ENCODE measurements at regions of chr15 and their contacts with region 1.

Region 1: DNA sequence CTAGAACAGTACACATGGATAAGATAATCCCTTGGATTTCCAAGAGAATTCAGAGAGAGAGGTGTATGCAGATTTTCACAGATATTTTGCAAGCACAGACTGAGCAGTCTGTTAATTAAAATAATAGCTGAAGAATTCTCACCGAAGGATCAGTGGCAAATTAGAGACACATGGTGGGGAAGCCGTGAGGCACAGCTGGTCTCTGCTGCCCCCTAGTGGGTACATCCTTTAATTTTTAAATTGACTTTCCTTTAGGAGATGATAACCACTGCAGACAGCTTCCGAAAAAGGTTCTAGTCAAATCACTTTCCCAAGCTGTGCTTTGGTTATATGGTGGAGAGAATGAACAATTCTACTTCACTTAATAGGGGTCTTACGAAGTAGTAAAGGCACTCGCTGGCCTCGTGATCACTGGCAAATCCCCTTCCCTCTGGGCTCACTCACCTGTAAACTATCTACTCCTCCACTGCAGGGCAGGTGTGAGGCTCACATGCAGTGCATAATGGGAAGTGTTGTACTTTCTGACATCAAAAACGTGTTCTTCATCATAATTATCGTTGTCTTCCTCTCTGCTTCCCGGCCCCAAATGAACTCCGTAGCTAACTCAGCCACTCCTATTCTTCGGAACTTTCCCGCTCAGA is 19.5 kb downstream of the MESD start:
- DNase-seq: peak; percentile 54
- ATAC-seq: peak; percentile 68
- H3K4me3 ChIP-seq: no peak overlapping the region
- H3K27ac ChIP-seq: no peak overlapping the region
- H3K4me1 ChIP-seq: peaks cover 13% of the 10 kb centered on the region
- H3K27me3 ChIP-seq: no peaks in the 10 kb centered on the region
- CTCF ChIP-seq: peak; percentile 86
- POLR2A ChIP-seq: 0 out of 2 replicates have a peak, but pooled peaks have one; percentile 40
- RAD21 ChIP-seq: peak; percentile 96

Region 2: GRCh38 chr15:80695104-80695910 is 274.8 kb before region 1 on chr15 and contains the start of gene ABHD17C:
- CTCF ChIA-PET with region 1: no interaction called
- POLR2A ChIA-PET with region 1: no interaction called
- dilution Hi-C with region 1: no loop called
- in situ Hi-C with region 1: no loop called
- intact Hi-C with region 1: loop called (anchors 5 kb)
- DNase-seq: peak; percentile 53
- ATAC-seq: peak; percentile 84
- H3K4me3 ChIP-seq: peak within 1 kb of the TSS; percentile 100
- H3K27ac ChIP-seq: peak within 1 kb of the TSS; percentile 92
- H3K4me1 ChIP-seq: peaks cover 14% of the 10 kb centered on the region
- H3K27me3 ChIP-seq: no peaks in the 10 kb centered on the region
- CTCF ChIP-seq: no peak
- POLR2A ChIP-seq: no peak
- RAD21 ChIP-seq: no peak; the same call in 1 of the 2 replicates
- total RNA-seq, gene ABHD17C: 5.3 and 5.4 TPM in 2 replicates

Region 3: DNA sequence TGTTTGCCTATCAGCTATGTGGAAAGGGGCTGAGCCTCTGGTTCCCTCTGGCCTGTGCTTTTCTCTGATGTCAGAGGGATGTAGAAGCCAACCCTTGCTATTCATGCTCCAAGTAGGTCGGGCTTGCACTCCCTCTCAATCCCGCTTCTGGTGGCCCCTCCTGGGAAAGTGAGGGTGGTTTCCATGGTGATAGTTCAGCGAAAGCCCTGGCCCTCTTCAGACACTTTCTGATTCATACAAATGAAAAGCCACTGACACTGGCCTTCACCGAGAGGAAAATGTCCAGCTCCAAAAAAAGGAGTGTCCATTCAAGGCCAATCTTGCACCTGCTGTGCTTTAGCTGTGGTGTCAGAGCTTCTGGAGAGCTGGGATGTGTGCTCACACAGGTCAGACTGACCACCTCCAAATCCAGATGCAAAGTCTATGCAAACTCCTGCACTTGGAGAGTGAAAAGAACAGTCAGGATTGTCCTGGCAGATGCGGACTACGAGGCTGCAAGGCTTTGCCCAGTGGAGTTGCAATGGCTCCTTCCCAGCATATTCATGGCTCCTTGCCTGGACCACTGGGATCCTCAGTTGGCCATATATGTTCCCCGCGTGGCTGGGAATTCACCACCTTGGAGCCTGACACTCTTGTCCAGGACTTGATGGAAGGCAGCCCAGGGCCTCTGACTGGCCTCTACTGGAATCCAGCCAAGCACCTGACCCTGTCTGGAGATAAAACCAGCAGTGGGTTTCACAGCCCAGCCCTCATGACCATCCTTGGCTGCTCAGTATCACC is 94.4 kb before region 1 on chr15:
- CTCF ChIA-PET with region 1: no interaction called
- POLR2A ChIA-PET with region 1: no interaction called
- dilution Hi-C with region 1: no loop called
- in situ Hi-C with region 1: no loop called
- intact Hi-C with region 1: loop called (anchors 5 kb)
- DNase-seq: no peak
- ATAC-seq: no peak
- H3K4me3 ChIP-seq: no peak overlapping the region
- H3K27ac ChIP-seq: no peak overlapping the region
- H3K4me1 ChIP-seq: peaks cover 14% of the 10 kb centered on the region
- H3K27me3 ChIP-seq: no peaks in the 10 kb centered on the region
- CTCF ChIP-seq: no peak
- POLR2A ChIP-seq: no peak
- RAD21 ChIP-seq: no peak

Region 4: GRCh38 chr15:81000624-81001151 is 30.6 kb after region 1 on chr15 and contains the start of gene TLNRD1:
- CTCF ChIA-PET with region 1: no interaction called
- POLR2A ChIA-PET with region 1: interaction called, 12 read pairs
- dilution Hi-C with region 1: no loop called
- in situ Hi-C with region 1: no loop called
- intact Hi-C with region 1: no loop called
- DNase-seq: peak; percentile 92
- ATAC-seq: peak; percentile 84
- H3K4me3 ChIP-seq: peak within 1 kb of the TSS; percentile 89
- H3K27ac ChIP-seq: peak within 1 kb of the TSS; percentile 86
- H3K4me1 ChIP-seq: peaks cover 13% of the 10 kb centered on the region
- H3K27me3 ChIP-seq: no peaks in the 10 kb centered on the region
- CTCF ChIP-seq: no peak
- POLR2A ChIP-seq: peak; percentile 91
- RAD21 ChIP-seq: no peak
- total RNA-seq, gene TLNRD1: 2.2 and 2.8 TPM in 2 replicates

Measured in IMR-90 (cell line).